Endothelial cell of umbilical vein (primary cell): ENCODE measurements at regions of chr5 and their contacts with region 1.

Region 1: GRCh38 chr5:66306105-66306843 is 162.2 kb downstream of the SREK1 start:
- DNase-seq: peak; percentile 72
- H3K4me3 ChIP-seq: no peak overlapping the region
- H3K27ac ChIP-seq: no peak overlapping the region
- H3K4me1 ChIP-seq: peaks cover 4% of the 10 kb centered on the region
- H3K27me3 ChIP-seq: peaks cover 7 to 14% of the 10 kb centered on the region in 2 experiments
- CTCF ChIP-seq: peak; percentile 81 to 88
- POLR2A ChIP-seq: no peak

Region 2: GRCh38 chr5:66324357-66324756 is 18.1 kb after region 1 on chr5:
- CTCF ChIA-PET with region 1: interaction called, 27 read pairs
- POLR2A ChIA-PET with region 1: no interaction called
- dilution Hi-C with region 1: no loop called
- intact Hi-C with region 1: no loop called
- DNase-seq: no peak
- H3K4me3 ChIP-seq: no peak overlapping the region
- H3K27ac ChIP-seq: no peak overlapping the region
- H3K4me1 ChIP-seq: no peaks in the 10 kb centered on the region
- H3K27me3 ChIP-seq: peaks cover 0 to 2% of the 10 kb centered on the region in 2 experiments
- CTCF ChIP-seq: no peak
- POLR2A ChIP-seq: no peak

Region 3: GRCh38 chr5:66406761-66407336 is 100.6 kb after region 1 on chr5:
- CTCF ChIA-PET with region 1: no interaction called
- POLR2A ChIA-PET with region 1: no interaction called
- dilution Hi-C with region 1: no loop called
- intact Hi-C with region 1: no loop called
- DNase-seq: no peak
- H3K4me3 ChIP-seq: no peak overlapping the region
- H3K27ac ChIP-seq: no peak overlapping the region
- H3K4me1 ChIP-seq: no peaks in the 10 kb centered on the region
- H3K27me3 ChIP-seq: no peaks in the 10 kb centered on the region
- CTCF ChIP-seq: no peak
- POLR2A ChIP-seq: no peak

Region 4: GRCh38 chr5:66498791-66499207 is 192.5 kb after region 1 on chr5:
- CTCF ChIA-PET with region 1: interaction called, 34 read pairs
- POLR2A ChIA-PET with region 1: no interaction called
- dilution Hi-C with region 1: no loop called
- intact Hi-C with region 1: loop called (anchors 1 kb)
- DNase-seq: peak; percentile 4
- H3K4me3 ChIP-seq: no peak overlapping the region
- H3K27ac ChIP-seq: no peak overlapping the region
- H3K4me1 ChIP-seq: no peaks in the 10 kb centered on the region
- H3K27me3 ChIP-seq: no peaks in the 10 kb centered on the region
- CTCF ChIP-seq: no peak
- POLR2A ChIP-seq: no peak

Region 5: DNA sequence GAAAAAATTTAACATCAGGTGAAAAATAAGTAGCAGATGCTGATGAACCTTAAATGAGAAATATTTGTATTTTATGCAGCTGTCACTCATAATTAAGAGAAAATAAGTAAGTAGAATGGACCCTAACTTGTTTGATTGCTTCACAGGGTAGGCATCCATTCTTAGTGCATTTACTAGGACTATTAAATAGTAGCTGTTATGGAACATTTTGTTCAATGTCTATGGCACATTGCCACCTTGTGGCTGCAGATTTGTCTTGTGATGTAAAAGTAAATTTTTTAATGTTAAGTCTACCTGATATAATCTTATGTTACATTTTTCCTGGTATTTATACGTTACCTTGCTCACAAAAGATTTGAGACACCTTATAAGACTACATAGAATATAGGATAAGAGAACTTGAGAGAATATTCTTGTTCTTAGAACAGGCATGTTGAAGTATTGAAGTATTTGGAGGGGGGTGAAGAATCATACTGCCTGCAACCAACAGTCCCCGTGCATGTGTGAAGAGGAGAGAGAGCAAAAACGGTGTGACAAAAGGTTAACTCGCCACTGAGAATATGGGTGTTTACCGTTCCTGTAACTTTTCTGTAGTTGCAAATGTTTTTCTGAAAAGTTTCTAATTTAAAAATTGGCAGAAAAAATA is 451.0 kb after region 1 on chr5:
- CTCF ChIA-PET with region 1: interaction called, 253 read pairs
- POLR2A ChIA-PET with region 1: no interaction called
- dilution Hi-C with region 1: no loop called
- intact Hi-C with region 1: loop called (anchors 1 kb)
- DNase-seq: peak; percentile 69
- H3K4me3 ChIP-seq: no peak overlapping the region
- H3K27ac ChIP-seq: no peak overlapping the region
- H3K4me1 ChIP-seq: no peaks in the 10 kb centered on the region
- H3K27me3 ChIP-seq: peaks cover 9 to 36% of the 10 kb centered on the region in 2 experiments
- CTCF ChIP-seq: peak; percentile 26 to 27
- POLR2A ChIP-seq: no peak

Region 6: DNA sequence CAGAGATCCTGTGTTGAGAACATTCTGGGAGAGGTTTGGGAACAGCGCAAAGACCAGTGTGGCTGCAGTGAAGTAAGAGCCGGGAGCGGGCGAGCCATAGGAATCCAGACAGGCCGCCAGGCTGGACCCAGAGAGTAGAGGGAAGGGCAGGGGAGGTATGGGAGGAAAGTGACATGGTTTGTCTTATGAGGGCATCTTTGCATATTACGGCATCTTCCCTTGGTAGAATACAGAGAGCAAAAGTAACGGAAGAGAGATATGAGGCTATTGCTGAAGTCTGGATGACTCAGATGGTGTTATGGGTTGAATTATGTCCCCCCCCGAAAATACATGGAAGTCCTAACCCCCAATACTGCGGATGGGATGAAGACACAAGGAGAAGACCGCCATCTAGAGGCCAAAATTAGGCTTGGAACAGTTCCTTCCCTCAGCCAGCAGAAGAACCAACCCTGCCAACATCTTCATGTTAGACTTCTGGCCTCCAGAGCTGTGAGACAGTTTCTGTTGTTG is 558.1 kb after region 1 on chr5:
- CTCF ChIA-PET with region 1: interaction called, 5 read pairs
- POLR2A ChIA-PET with region 1: no interaction called
- dilution Hi-C with region 1: no loop called
- intact Hi-C with region 1: loop called (anchors 1 kb)
- DNase-seq: peak; percentile 86
- H3K4me3 ChIP-seq: no peak overlapping the region
- H3K27ac ChIP-seq: peak overlapping the region; percentile 19
- H3K4me1 ChIP-seq: peaks cover 42% of the 10 kb centered on the region
- H3K27me3 ChIP-seq: no peaks in the 10 kb centered on the region
- CTCF ChIP-seq: peak; percentile 42 to 67
- POLR2A ChIP-seq: peak; percentile 39